ENCODE measurements at regions of chr4 and their contacts with region 1.

Region 1: GRCh38 chr4:48602222-48602621 is 112.2 kb downstream of the ZAR1 start:
- DNase-seq: no peak
- ATAC-seq: no peak
- H3K4me3 ChIP-seq: no peak overlapping the region
- H3K27ac ChIP-seq: no peak overlapping the region
- H3K4me1 ChIP-seq: peaks cover 0 to 17% (median 0%) of the 10 kb centered on the region in 12 donors
- H3K27me3 ChIP-seq: no peaks in the 10 kb centered on the region
- CTCF ChIP-seq: no peak
- POLR2A ChIP-seq: no peak

Region 2: DNA sequence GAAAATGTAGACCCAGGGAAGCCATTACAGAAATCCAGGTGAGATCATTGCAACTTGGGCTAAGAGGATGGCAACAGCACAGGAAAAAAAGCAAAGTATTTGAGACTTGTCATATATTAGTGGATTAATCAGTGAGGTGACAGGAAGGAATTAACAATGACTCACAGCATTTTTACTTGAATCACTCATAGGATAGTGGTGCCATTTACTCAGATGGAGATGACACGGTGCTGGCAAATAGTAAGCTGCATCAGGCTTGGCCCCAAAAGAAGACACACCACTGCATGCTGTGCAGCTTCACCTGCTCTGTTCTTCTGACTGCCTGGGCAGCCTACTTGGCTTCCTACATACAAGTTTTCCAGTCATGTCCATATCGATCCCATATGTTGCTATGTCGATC is 33.1 kb after region 1 on chr4:
- intact Hi-C with region 1: loop called in 1 of 10 experiments (anchors 5 kb)
- DNase-seq: no peak
- ATAC-seq: peak in 2 of 4 donors; percentile 7 to 34
- H3K4me3 ChIP-seq: no peak overlapping the region
- H3K27ac ChIP-seq: peak overlapping the region in 4 of 12 donors; percentile 1 to 29 (median 14)
- H3K4me1 ChIP-seq: peaks cover 0 to 38% (median 13%) of the 10 kb centered on the region in 12 donors
- H3K27me3 ChIP-seq: no peaks in the 10 kb centered on the region
- CTCF ChIP-seq: no peak
- POLR2A ChIP-seq: no peak

Region 3: DNA sequence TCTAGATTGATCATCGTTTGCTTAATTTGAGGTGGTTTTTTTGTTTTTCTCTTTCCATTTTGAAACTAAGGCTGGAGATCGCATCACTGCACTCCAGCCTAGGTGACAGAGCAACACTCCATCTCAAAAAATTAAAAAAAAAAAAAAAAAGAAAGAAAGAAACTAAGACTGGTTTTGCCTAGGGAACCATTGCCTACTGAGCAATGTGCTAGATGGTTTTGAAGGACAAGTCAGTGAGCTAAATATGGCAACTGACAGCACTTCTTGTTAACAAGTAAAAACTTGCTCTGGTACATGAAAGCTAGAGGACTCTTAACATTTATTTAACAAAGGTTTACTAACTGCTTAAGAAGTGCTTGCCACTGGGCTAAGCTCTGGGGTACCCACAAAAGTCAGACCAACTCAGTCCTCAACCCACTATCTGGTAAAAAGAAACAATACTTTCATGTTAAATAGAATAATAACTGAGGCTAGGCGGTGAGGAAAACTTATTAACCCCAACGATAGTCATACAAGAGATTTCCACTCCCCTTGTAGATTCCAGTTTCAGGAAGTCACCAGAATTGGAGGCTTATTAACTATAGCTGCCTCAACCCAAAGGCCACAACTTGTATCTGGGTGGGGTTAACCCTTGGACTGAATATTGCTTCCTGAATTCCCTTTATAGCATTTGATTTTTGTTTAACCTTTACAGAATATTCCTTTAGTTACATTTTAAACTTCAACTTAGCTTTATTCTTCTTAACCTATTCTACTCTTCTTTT is 66.2 kb after region 1 on chr4:
- intact Hi-C with region 1: loop called in 1 of 10 experiments (anchors 5 kb)
- DNase-seq: no peak
- ATAC-seq: peak; percentile 69 to 80 (median 73)
- H3K4me3 ChIP-seq: no peak overlapping the region
- H3K27ac ChIP-seq: peak overlapping the region; percentile 8 to 75 (median 58)
- H3K4me1 ChIP-seq: peaks cover 5 to 57% (median 40%) of the 10 kb centered on the region in 12 donors
- H3K27me3 ChIP-seq: no peaks in the 10 kb centered on the region
- CTCF ChIP-seq: no peak
- POLR2A ChIP-seq: no peak

Measured in heart left ventricle (tissue), 16 donors.